ENCODE measurements at regions of chr16 and their contacts with region 1.

Region 1: GRCh38 chr16:10266809-10267208 is 84.6 kb upstream of the GRIN2A start:
- DNase-seq: no peak
- ATAC-seq: no peak
- H3K4me3 ChIP-seq: no peak overlapping the region
- H3K4me3 Mint-ChIP-seq: no peak overlapping the region
- H3K27ac ChIP-seq: no peak overlapping the region
- H3K27ac Mint-ChIP-seq: no peak overlapping the region
- H3K4me1 ChIP-seq: no peaks in the 10 kb centered on the region
- H3K4me1 Mint-ChIP-seq: peaks cover 7% of the 10 kb centered on the region
- H3K27me3 ChIP-seq: no peaks in the 10 kb centered on the region
- H3K27me3 Mint-ChIP-seq: no peaks in the 10 kb centered on the region
- CTCF ChIP-seq: no peak

Region 2: GRCh38 chr16:10228546-10229178 is 38.1 kb before region 1 on chr16:
- CTCF ChIA-PET with region 1: no interaction called
- POLR2A ChIA-PET with region 1: no interaction called
- intact Hi-C with region 1: no loop called
- DNase-seq: no peak
- ATAC-seq: no peak
- H3K4me3 ChIP-seq: no peak overlapping the region
- H3K4me3 Mint-ChIP-seq: no peak overlapping the region
- H3K27ac ChIP-seq: no peak overlapping the region
- H3K27ac Mint-ChIP-seq: no peak overlapping the region
- H3K4me1 ChIP-seq: no peaks in the 10 kb centered on the region
- H3K4me1 Mint-ChIP-seq: no peaks in the 10 kb centered on the region
- H3K27me3 ChIP-seq: no peaks in the 10 kb centered on the region
- H3K27me3 Mint-ChIP-seq: peaks cover 12% of the 10 kb centered on the region
- CTCF ChIP-seq: no peak

Region 3: DNA sequence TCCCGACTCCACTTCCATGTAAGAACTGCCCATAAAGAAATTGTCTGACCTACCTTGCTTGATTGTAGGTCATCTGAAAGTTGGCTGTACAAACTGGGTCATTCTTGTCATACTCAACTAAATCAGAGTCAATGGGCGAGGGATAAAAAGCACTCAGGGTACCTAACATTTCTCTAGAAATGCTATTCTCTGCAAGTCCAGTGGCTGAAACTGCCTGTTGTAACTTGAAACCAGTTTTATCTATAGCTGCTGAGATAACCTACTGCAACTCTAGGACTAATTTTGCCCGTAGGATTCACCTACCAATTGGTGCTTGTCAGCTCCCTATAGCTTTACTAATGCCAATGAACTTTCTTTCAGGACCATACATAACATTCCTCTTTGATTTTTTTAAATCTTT is 15.6 kb after region 1 on chr16:
- CTCF ChIA-PET with region 1: no interaction called
- POLR2A ChIA-PET with region 1: no interaction called
- intact Hi-C with region 1: loop called in 1 of 2 experiments (anchors 1 kb)
- DNase-seq: no peak
- ATAC-seq: no peak
- H3K4me3 ChIP-seq: no peak overlapping the region
- H3K4me3 Mint-ChIP-seq: no peak overlapping the region
- H3K27ac ChIP-seq: no peak overlapping the region
- H3K27ac Mint-ChIP-seq: no peak overlapping the region
- H3K4me1 ChIP-seq: no peaks in the 10 kb centered on the region
- H3K4me1 Mint-ChIP-seq: no peaks in the 10 kb centered on the region
- H3K27me3 ChIP-seq: no peaks in the 10 kb centered on the region
- H3K27me3 Mint-ChIP-seq: no peaks in the 10 kb centered on the region
- CTCF ChIP-seq: no peak

Measured in CD8-positive, alpha-beta T cell (primary cell).